ENCODE measurements at regions of chr1 and their contacts with region 1.

Region 1: DNA sequence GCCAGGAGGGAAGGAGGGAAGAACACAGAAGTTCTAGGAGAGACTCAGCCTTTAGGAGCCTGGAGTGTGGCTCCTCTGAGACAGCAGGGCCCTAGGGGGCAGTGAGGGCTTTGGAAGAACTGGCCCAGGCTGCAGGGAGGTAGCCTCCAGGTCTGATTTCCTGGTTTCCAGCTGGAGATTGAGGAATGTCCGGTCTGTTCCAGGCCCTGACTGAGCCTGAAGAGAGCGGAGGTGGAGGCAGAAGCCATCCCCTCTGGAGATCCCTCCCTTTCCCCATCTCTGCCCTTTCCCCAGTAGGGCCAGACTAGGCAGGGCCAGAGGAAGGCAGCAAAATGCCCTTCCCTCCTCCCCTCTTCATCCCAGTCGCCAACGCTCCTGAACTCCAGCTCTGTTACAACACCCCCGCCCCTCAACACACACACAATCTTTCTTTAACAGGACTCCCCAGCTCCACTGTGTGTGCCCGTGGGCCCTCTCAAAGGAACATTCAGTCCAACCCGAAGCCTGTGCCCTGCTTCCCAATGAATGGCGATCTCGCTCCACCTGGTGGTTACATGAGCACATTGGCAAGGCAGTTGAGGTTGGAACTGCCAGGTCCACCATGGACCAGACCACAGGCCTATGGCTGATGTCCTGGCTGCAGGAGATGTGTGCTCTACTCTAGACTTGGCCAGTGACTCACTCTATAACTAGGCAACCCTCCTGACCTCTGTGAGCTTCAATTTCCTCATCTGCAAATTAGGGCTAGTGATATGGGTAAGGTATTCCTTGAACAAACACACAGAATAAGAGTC is 32.0 kb downstream of the MAP7D1 start:
- DNase-seq: peak; percentile 87
- ATAC-seq: peak; percentile 99
- H3K4me3 Mint-ChIP-seq: no peak overlapping the region
- H3K27ac Mint-ChIP-seq: peak overlapping the region; percentile 56
- H3K4me1 Mint-ChIP-seq: peaks cover 4% of the 10 kb centered on the region
- H3K27me3 Mint-ChIP-seq: no peaks in the 10 kb centered on the region

Region 2: DNA sequence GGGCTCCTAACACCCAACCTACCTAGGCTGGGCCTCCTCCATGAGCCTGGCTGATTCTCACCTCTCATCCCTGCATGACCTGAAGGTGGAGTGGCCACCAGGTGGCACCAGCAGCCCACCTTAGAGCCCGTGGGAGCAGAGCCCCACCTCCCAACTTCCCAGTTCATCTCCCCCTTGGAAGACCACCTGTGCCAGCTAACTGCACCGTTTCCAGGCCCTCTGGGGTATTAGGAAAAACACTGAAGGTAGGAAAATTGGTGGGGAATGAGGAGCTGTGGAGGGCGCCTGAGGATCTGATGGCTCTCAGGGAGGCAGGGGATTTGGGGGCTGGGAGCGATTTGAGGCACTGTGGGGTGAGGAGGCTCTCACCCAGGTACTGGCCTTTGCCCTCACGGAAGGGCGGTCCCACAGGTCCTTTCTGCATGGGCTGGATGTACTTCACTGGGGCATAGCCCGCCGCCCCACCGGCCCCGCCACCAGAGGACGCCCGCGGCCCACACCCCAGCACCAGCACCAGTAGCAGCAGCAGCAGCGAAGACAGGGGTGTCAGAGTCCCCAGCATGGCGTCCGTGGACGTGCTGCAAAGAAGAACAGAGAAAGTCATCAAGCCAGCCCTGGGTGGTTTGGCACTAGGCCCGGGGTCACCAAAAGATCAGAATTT is 88.2 kb before region 1 on chr1:
- CTCF ChIA-PET with region 1: interaction called, 9 read pairs
- POLR2A ChIA-PET with region 1: no interaction called
- intact Hi-C with region 1: loop called (anchors 1 kb)
- DNase-seq: peak; percentile 87
- ATAC-seq: peak; percentile 95
- H3K4me3 Mint-ChIP-seq: no peak overlapping the region
- H3K27ac Mint-ChIP-seq: peak overlapping the region; percentile 10
- H3K4me1 Mint-ChIP-seq: no peaks in the 10 kb centered on the region
- H3K27me3 Mint-ChIP-seq: no peaks in the 10 kb centered on the region

Region 3: GRCh38 chr1:36160949-36161485 is 27.0 kb before region 1 on chr1:
- CTCF ChIA-PET with region 1: interaction called, 30 read pairs
- POLR2A ChIA-PET with region 1: interaction called, 5 read pairs
- intact Hi-C with region 1: no loop called
- DNase-seq: peak; percentile 86
- ATAC-seq: peak; percentile 59
- H3K4me3 Mint-ChIP-seq: peak overlapping the region; percentile 76
- H3K27ac Mint-ChIP-seq: peak overlapping the region; percentile 94
- H3K4me1 Mint-ChIP-seq: peaks cover 62% of the 10 kb centered on the region
- H3K27me3 Mint-ChIP-seq: no peaks in the 10 kb centered on the region

Region 4: GRCh38 chr1:36350659-36351226 is 162.7 kb after region 1 on chr1:
- CTCF ChIA-PET with region 1: no interaction called
- POLR2A ChIA-PET with region 1: no interaction called
- intact Hi-C with region 1: no loop called
- DNase-seq: peak; percentile 77
- ATAC-seq: peak; percentile 87
- H3K4me3 Mint-ChIP-seq: peak overlapping the region; percentile 15
- H3K27ac Mint-ChIP-seq: peak overlapping the region; percentile 80
- H3K4me1 Mint-ChIP-seq: peaks cover 38% of the 10 kb centered on the region
- H3K27me3 Mint-ChIP-seq: no peaks in the 10 kb centered on the region

Region 5: GRCh38 chr1:36603461-36603860 is 415.5 kb after region 1 on chr1:
- CTCF ChIA-PET with region 1: no interaction called
- POLR2A ChIA-PET with region 1: no interaction called
- intact Hi-C with region 1: no loop called
- DNase-seq: no peak
- ATAC-seq: no peak
- H3K4me3 Mint-ChIP-seq: no peak overlapping the region
- H3K27ac Mint-ChIP-seq: no peak overlapping the region
- H3K4me1 Mint-ChIP-seq: peaks cover 6% of the 10 kb centered on the region
- H3K27me3 Mint-ChIP-seq: peaks cover 5% of the 10 kb centered on the region

Measured in activated CD4-positive, alpha-beta T cell treated with anti-CD3 and anti-CD28 coated beads for 36 hours (primary cell).